B cell (primary cell): ENCODE measurements at regions of chr10 and their contacts with region 1.

Region 1: DNA sequence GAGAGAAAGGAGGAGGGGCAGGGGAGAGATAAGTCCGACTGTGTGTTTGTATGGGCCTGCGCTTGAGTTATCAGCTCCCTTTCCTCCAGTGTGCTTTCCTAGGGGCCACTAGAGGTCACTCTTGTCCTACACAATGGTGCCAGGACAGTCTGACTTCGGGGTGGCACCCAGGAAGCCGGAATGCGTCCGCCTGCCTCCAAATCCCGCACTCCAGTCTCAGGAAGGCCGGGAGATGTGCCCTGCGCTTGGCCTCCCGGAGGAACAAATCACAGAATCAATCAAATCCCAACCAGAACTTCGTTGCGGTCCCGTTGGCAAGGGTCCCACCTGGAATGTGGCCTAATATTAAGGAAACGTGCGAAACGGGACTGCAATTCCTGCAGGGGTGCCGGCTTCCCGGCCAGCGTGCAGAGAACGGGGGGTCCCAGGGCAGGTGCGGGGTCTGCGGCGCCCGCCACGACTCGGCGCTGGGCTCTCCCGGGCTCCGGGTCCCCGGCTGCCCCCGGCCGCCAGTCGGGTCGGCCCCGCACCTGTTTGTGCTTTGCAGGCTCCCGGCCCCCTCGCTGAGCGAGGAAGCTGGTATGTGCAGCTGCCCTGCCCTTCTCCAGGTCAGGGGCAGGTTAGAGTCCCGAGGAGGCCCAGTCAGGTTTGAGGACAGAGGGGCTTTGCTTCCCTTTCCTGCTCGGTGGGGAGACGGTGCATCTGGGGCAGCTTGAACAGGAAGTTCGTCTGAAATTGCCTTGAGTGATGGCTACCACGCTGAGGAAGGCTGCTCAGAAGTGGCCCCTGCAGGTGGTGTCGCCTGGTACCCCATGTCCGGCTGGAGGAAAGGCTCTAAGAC is 21.0 kb upstream of the HPS1 start:
- DNase-seq: peak; percentile 86
- ATAC-seq: peak; percentile 93
- H3K4me3 ChIP-seq: peak overlapping the region; percentile 49 to 91 (median 75)
- H3K4me3 Mint-ChIP-seq: peak overlapping the region; percentile 98
- H3K27ac ChIP-seq: peak overlapping the region in 1 of 2 donors; percentile 64
- H3K27ac Mint-ChIP-seq: peak overlapping the region; percentile 92
- H3K4me1 ChIP-seq: peaks cover 4 to 5% of the 10 kb centered on the region in 2 donors
- H3K4me1 Mint-ChIP-seq: peaks cover 6% of the 10 kb centered on the region
- H3K27me3 ChIP-seq: peaks cover 0 to 9% (median 3%) of the 10 kb centered on the region in 4 experiments
- H3K27me3 Mint-ChIP-seq: peaks cover 11% of the 10 kb centered on the region
- CTCF ChIP-seq: peak; percentile 81

Region 2: GRCh38 chr10:98134431-98135221 is 333.1 kb before region 1 on chr10 and contains the start of gene R3HCC1L:
- CTCF ChIA-PET with region 1: no interaction called
- POLR2A ChIA-PET with region 1: no interaction called
- intact Hi-C with region 1: loop called (anchors 5 kb)
- DNase-seq: peak; percentile 94
- ATAC-seq: peak; percentile 90
- H3K4me3 ChIP-seq: peak within 1 kb of the TSS; percentile 80 to 97 (median 90)
- H3K4me3 Mint-ChIP-seq: peak within 1 kb of the TSS; percentile 97
- H3K27ac ChIP-seq: peak within 1 kb of the TSS; percentile 87 to 97
- H3K27ac Mint-ChIP-seq: peak within 1 kb of the TSS; percentile 98
- H3K4me1 ChIP-seq: peaks cover 31 to 36% of the 10 kb centered on the region in 2 donors
- H3K4me1 Mint-ChIP-seq: peaks cover 63% of the 10 kb centered on the region
- H3K27me3 ChIP-seq: no peaks in the 10 kb centered on the region
- H3K27me3 Mint-ChIP-seq: no peaks in the 10 kb centered on the region
- CTCF ChIP-seq: no peak
- total RNA-seq, gene R3HCC1L: 25.1 and 26.8 TPM in 2 replicates

Region 3: GRCh38 chr10:98446661-98447221 is 21.0 kb before region 1 on chr10 and contains the start of gene HPS1:
- CTCF ChIA-PET with region 1: interaction called, 8 read pairs
- POLR2A ChIA-PET with region 1: interaction called, 3 read pairs
- intact Hi-C with region 1: loop called (anchors 1 kb)
- DNase-seq: peak; percentile 92
- ATAC-seq: peak; percentile 85
- H3K4me3 ChIP-seq: peak within 1 kb of the TSS; percentile 55 to 88 (median 82)
- H3K4me3 Mint-ChIP-seq: peak within 1 kb of the TSS; percentile 90
- H3K27ac ChIP-seq: peak within 1 kb of the TSS; percentile 94 to 97
- H3K27ac Mint-ChIP-seq: peak within 1 kb of the TSS; percentile 95
- H3K4me1 ChIP-seq: peaks cover 28 to 39% of the 10 kb centered on the region in 2 donors
- H3K4me1 Mint-ChIP-seq: peaks cover 49% of the 10 kb centered on the region
- H3K27me3 ChIP-seq: no peaks in the 10 kb centered on the region
- H3K27me3 Mint-ChIP-seq: no peaks in the 10 kb centered on the region
- CTCF ChIP-seq: no peak
- total RNA-seq, gene HPS1: 125 TPM in 2 replicates

Region 4: DNA sequence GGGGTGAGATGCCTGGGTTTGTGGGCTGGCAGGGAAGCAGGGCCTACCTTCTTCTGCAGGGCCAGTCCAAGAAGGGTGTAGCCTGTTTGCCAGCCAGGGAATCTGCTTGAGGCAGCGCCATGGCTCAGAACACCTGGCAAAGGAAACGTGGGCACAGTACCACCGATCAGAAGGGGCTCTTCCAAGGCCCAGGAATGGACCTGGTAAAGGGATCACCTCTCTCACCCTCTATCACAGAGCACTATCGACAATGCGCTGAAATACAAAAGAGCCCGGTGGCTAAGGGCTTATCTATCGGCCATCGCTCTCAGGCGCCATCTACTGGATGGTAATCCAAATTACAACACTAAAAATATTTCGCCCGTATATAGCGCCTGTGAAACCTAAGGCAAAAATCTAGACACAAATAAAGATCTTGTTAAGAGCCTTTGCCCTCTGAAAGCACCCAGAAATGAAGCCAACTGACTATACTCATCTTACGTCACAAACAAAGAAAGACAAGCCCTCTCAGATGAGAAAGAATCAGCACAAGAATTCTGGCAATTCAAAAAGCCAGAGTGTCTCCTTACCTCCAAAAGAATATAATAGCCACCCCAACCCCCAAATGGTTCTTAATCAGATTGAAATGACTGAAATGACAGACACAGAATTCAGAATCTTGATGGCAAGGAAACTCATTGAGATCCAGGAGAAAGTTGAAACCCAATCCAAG is 196.8 kb after region 1 on chr10:
- CTCF ChIA-PET with region 1: interaction called, 26 read pairs
- POLR2A ChIA-PET with region 1: no interaction called
- intact Hi-C with region 1: loop called (anchors 1 kb)
- DNase-seq: peak; percentile 58
- ATAC-seq: peak; percentile 43
- H3K4me3 ChIP-seq: no peak overlapping the region
- H3K4me3 Mint-ChIP-seq: no peak overlapping the region
- H3K27ac ChIP-seq: no peak overlapping the region
- H3K27ac Mint-ChIP-seq: no peak overlapping the region
- H3K4me1 ChIP-seq: no peaks in the 10 kb centered on the region
- H3K4me1 Mint-ChIP-seq: no peaks in the 10 kb centered on the region
- H3K27me3 ChIP-seq: peaks cover 0 to 16% (median 2%) of the 10 kb centered on the region in 4 experiments
- H3K27me3 Mint-ChIP-seq: peaks cover 29% of the 10 kb centered on the region
- CTCF ChIP-seq: peak; percentile 73

Region 5: GRCh38 chr10:98748298-98748697 is 280.6 kb after region 1 on chr10:
- CTCF ChIA-PET with region 1: interaction called, 9 read pairs
- POLR2A ChIA-PET with region 1: no interaction called
- intact Hi-C with region 1: loop called (anchors 1 kb)
- DNase-seq: peak; percentile 17
- ATAC-seq: no peak
- H3K4me3 ChIP-seq: no peak overlapping the region
- H3K4me3 Mint-ChIP-seq: no peak overlapping the region
- H3K27ac ChIP-seq: no peak overlapping the region
- H3K27ac Mint-ChIP-seq: no peak overlapping the region
- H3K4me1 ChIP-seq: no peaks in the 10 kb centered on the region
- H3K4me1 Mint-ChIP-seq: no peaks in the 10 kb centered on the region
- H3K27me3 ChIP-seq: peaks cover 0 to 5% (median 0%) of the 10 kb centered on the region in 4 experiments
- H3K27me3 Mint-ChIP-seq: peaks cover 18% of the 10 kb centered on the region
- CTCF ChIP-seq: peak; percentile 57

Region 6: DNA sequence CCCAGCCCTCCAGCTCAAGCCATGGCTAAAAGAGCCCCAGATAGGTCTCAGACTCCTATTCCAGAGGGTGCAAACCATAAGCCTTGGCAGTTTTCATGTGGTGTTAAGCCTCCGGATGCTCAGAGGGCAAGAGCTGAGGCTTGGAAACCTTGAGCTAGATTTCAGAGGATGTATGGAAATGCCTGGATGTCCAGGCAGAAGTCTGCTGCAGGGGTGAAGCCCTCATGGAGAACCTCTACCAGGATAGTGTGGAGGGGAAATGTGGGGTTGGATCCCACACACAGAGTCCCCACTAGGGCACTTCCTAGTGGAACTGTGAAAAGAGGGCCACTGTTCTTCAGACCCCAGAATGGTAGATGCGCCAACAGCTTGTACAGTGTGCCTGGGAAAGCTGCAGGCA is 781.1 kb after region 1 on chr10:
- CTCF ChIA-PET with region 1: interaction called, 141 read pairs
- POLR2A ChIA-PET with region 1: no interaction called
- intact Hi-C with region 1: loop called (anchors 1 kb)
- DNase-seq: no peak
- ATAC-seq: no peak
- H3K4me3 ChIP-seq: no peak overlapping the region
- H3K4me3 Mint-ChIP-seq: no peak overlapping the region
- H3K27ac ChIP-seq: no peak overlapping the region
- H3K27ac Mint-ChIP-seq: no peak overlapping the region
- H3K4me1 ChIP-seq: no peaks in the 10 kb centered on the region
- H3K4me1 Mint-ChIP-seq: no peaks in the 10 kb centered on the region
- H3K27me3 ChIP-seq: peaks cover 0 to 6% (median 2%) of the 10 kb centered on the region in 4 experiments
- H3K27me3 Mint-ChIP-seq: peaks cover 14% of the 10 kb centered on the region
- CTCF ChIP-seq: no peak

Region 7: GRCh38 chr10:99395750-99396445 is 928.2 kb after region 1 on chr10:
- CTCF ChIA-PET with region 1: interaction called, 13 read pairs
- POLR2A ChIA-PET with region 1: no interaction called
- intact Hi-C with region 1: no loop called
- DNase-seq: no peak
- ATAC-seq: no peak
- H3K4me3 ChIP-seq: no peak overlapping the region
- H3K4me3 Mint-ChIP-seq: no peak overlapping the region
- H3K27ac ChIP-seq: no peak overlapping the region
- H3K27ac Mint-ChIP-seq: no peak overlapping the region
- H3K4me1 ChIP-seq: peaks cover 2 to 4% of the 10 kb centered on the region in 2 donors
- H3K4me1 Mint-ChIP-seq: peaks cover 1% of the 10 kb centered on the region
- H3K27me3 ChIP-seq: peaks cover 0 to 2% (median 0%) of the 10 kb centered on the region in 4 experiments
- H3K27me3 Mint-ChIP-seq: no peaks in the 10 kb centered on the region
- CTCF ChIP-seq: no peak